Activated CD4-positive, alpha-beta memory T cell treated with anti-CD3 and anti-CD28 coated beads for 36 hours (primary cell): ENCODE measurements at regions of chr2 and their contacts with region 1.

Region 1: GRCh38 chr2:230924470-230925341 is at the start of gene GPR55:
- DNase-seq: peak; percentile 90
- H3K4me3 Mint-ChIP-seq: peak within 1 kb of the TSS; percentile 74
- H3K27ac Mint-ChIP-seq: peak within 1 kb of the TSS; percentile 91
- H3K4me1 Mint-ChIP-seq: peaks cover 58% of the 10 kb centered on the region
- H3K27me3 Mint-ChIP-seq: peaks cover 11% of the 10 kb centered on the region
- total RNA-seq, gene GPR55: 1.5 to 1.6 TPM

Region 2: GRCh38 chr2:230847883-230848388 is 76.8 kb before region 1 on chr2:
- CTCF ChIA-PET with region 1: interaction called, 7 read pairs
- POLR2A ChIA-PET with region 1: no interaction called
- intact Hi-C with region 1: loop called (anchors 1 kb)
- DNase-seq: peak; percentile 96
- H3K4me3 Mint-ChIP-seq: peak overlapping the region; percentile 21
- H3K27ac Mint-ChIP-seq: peak overlapping the region; percentile 33
- H3K4me1 Mint-ChIP-seq: peaks cover 20% of the 10 kb centered on the region
- H3K27me3 Mint-ChIP-seq: peaks cover 31% of the 10 kb centered on the region

Region 3: GRCh38 chr2:230902180-230902899 is 22.4 kb before region 1 on chr2:
- CTCF ChIA-PET with region 1: interaction called, 71 read pairs
- POLR2A ChIA-PET with region 1: interaction called, 6 read pairs
- intact Hi-C with region 1: loop called (anchors 1 kb)
- DNase-seq: peak; percentile 72
- H3K4me3 Mint-ChIP-seq: no peak overlapping the region
- H3K27ac Mint-ChIP-seq: no peak overlapping the region
- H3K4me1 Mint-ChIP-seq: peaks cover 49% of the 10 kb centered on the region
- H3K27me3 Mint-ChIP-seq: peaks cover 21% of the 10 kb centered on the region

Region 4: GRCh38 chr2:230913406-230914143 is 11.1 kb before region 1 on chr2:
- CTCF ChIA-PET with region 1: interaction called, 71 read pairs
- POLR2A ChIA-PET with region 1: interaction called, 18 read pairs
- intact Hi-C with region 1: loop called (anchors 1 kb)
- DNase-seq: peak; percentile 41
- H3K4me3 Mint-ChIP-seq: no peak overlapping the region
- H3K27ac Mint-ChIP-seq: no peak overlapping the region
- H3K4me1 Mint-ChIP-seq: peaks cover 48% of the 10 kb centered on the region
- H3K27me3 Mint-ChIP-seq: peaks cover 22% of the 10 kb centered on the region

Region 5: GRCh38 chr2:230947908-230948365 is 23.2 kb after region 1 on chr2:
- CTCF ChIA-PET with region 1: interaction called, 7 read pairs
- POLR2A ChIA-PET with region 1: interaction called, 11 read pairs
- intact Hi-C with region 1: loop called (anchors 1 kb)
- DNase-seq: no peak
- H3K4me3 Mint-ChIP-seq: no peak overlapping the region
- H3K27ac Mint-ChIP-seq: no peak overlapping the region
- H3K4me1 Mint-ChIP-seq: peaks cover 50% of the 10 kb centered on the region
- H3K27me3 Mint-ChIP-seq: peaks cover 19% of the 10 kb centered on the region

Region 6: DNA sequence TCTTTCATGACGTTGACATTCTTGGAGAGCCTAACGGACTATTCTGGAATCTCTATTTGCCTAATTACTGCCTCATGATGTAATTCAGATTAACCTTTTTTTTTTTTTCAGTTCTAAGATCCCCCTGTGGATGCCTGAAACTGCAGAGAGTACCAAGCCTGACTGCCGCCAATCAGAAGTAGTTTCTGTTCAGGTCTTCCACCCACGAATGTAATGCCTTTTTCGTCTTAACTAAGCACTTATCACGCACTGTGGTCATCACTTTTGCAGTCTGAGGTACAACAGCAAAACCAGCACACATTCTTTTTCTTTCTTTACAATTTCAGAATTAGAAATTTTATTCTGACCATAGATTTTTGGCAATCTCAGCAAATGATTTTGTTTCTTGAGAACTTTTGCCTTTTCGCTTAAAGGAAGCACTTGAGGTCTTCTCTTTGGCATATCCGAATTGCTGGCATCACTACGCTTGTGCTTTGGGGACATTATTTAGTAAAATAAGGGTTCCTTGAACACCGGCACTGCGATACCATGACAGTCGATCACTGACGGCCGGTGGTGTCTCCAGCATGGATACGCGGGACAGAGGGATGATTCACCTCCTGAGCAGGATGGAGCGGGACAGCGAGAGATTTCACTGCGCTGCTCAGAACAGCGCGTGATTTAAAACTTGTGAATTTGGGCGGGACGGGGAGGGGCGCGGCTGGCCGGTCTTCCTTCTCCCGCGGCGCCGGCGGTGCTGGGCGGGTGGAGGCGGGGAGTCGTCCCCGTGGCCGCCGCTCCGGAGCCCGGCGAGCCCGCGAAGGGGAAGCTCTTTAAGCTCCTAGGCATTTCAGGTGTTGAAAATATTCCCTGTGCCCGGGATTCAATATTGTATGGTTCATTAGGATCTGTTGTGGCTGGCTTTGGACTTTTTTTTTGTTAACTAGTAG is 32.4 kb after region 1 on chr2:
- CTCF ChIA-PET with region 1: interaction called, 8 read pairs
- POLR2A ChIA-PET with region 1: interaction called, 7 read pairs
- intact Hi-C with region 1: loop called (anchors 1 kb)
- DNase-seq: peak; percentile 65
- H3K4me3 Mint-ChIP-seq: peak overlapping the region; percentile 77
- H3K27ac Mint-ChIP-seq: peak overlapping the region; percentile 82
- H3K4me1 Mint-ChIP-seq: peaks cover 46% of the 10 kb centered on the region
- H3K27me3 Mint-ChIP-seq: peaks cover 58% of the 10 kb centered on the region

Region 7: DNA sequence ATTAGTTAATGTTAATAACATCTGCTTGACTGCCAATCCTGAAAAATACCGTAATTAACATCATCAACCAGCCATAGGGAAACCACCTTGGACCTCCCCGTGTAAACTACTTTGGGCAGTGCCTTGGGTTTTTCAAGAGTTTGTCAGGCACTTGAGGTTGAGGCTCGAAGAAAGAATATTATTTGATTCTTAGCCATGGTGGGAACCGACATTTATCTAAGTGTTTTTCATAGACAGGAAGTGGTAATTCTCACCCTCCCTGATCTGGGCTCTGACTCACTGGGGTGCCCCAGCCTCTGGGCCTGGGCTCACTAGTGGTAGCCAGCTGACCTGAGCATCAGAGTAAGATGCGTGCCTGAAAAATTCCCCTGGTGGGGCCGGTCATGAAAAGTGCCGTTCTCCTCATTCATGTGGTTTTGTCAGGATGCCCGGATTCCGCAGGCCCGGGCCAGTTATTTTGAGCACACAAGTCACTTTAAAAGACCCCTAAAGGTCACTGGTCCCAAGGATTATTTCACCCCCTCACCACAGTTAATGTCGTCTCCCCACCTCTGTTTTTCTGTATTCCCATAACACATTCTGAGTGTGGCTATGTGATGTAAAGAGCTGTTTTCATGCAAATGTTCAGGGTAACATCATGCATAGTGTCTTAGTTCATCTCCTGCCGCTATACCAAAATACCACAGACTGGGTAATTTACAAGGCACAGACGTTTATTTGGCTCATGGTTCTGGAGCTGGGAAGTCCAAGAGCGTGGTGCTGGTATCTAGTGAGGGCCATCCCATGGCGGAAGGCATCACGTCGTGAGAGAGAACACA is 49.6 kb after region 1 on chr2:
- CTCF ChIA-PET with region 1: interaction called, 13 read pairs
- POLR2A ChIA-PET with region 1: interaction called, 5 read pairs
- intact Hi-C with region 1: loop called (anchors 1 kb)
- DNase-seq: peak; percentile 87
- H3K4me3 Mint-ChIP-seq: peak overlapping the region; percentile 17
- H3K27ac Mint-ChIP-seq: peak overlapping the region; percentile 85
- H3K4me1 Mint-ChIP-seq: peaks cover 54% of the 10 kb centered on the region
- H3K27me3 Mint-ChIP-seq: peaks cover 15% of the 10 kb centered on the region